ENCODE measurements at regions of chr17 and their contacts with region 1.

Region 1: GRCh38 chr17:7561028-7561575 is 617 bp upstream of the SENP3 start:
- DNase-seq: peak; percentile 76
- ATAC-seq: peak; percentile 68
- H3K4me3 Mint-ChIP-seq: peak overlapping the region; percentile 92
- H3K27ac Mint-ChIP-seq: peak overlapping the region; percentile 96
- H3K4me1 Mint-ChIP-seq: peaks cover 60% of the 10 kb centered on the region
- H3K27me3 Mint-ChIP-seq: no peaks in the 10 kb centered on the region
- CTCF ChIP-seq: no peak

Region 2: DNA sequence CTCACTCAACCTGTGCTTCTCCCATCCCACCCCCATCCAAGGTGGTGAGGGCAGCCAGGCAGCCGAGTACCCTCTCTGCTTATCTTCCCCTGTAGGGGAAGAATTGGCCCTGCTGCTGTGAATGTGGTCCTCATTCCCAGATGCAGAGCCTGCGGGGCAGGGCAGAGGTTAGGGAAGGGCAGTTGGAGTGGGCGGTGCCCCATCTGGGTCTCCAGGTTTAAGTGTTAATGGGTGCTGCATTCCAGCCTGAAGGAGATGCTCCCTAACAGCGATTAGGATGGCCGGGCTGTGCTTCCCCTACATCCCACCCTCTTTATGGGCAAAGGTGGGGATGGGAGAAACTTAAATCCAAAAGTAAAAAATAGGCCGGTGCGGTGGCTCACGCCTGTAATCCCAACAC is 194.0 kb before region 1 on chr17:
- CTCF ChIA-PET with region 1: no interaction called
- POLR2A ChIA-PET with region 1: no interaction called
- intact Hi-C with region 1: no loop called
- DNase-seq: no peak
- ATAC-seq: no peak
- H3K4me3 Mint-ChIP-seq: no peak overlapping the region
- H3K27ac Mint-ChIP-seq: no peak overlapping the region
- H3K4me1 Mint-ChIP-seq: no peaks in the 10 kb centered on the region
- H3K27me3 Mint-ChIP-seq: no peaks in the 10 kb centered on the region
- CTCF ChIP-seq: no peak

Region 3: GRCh38 chr17:7515911-7516610 is 45.0 kb before region 1 on chr17:
- CTCF ChIA-PET with region 1: interaction called, 364 read pairs
- POLR2A ChIA-PET with region 1: interaction called, 98 read pairs
- intact Hi-C with region 1: loop called (anchors 1 kb)
- DNase-seq: no peak
- ATAC-seq: no peak
- H3K4me3 Mint-ChIP-seq: no peak overlapping the region
- H3K27ac Mint-ChIP-seq: peak overlapping the region; percentile 35
- H3K4me1 Mint-ChIP-seq: no peaks in the 10 kb centered on the region
- H3K27me3 Mint-ChIP-seq: no peaks in the 10 kb centered on the region
- CTCF ChIP-seq: no peak

Region 4: GRCh38 chr17:7548585-7549400 is 12.3 kb before region 1 on chr17 and contains the start of gene TNFSF12:
- CTCF ChIA-PET with region 1: interaction called, 20 read pairs
- POLR2A ChIA-PET with region 1: interaction called, 56 read pairs
- intact Hi-C with region 1: loop called (anchors 1 kb)
- DNase-seq: peak; percentile 55
- ATAC-seq: peak; percentile 58
- H3K4me3 Mint-ChIP-seq: peak within 1 kb of the TSS; percentile 82
- H3K27ac Mint-ChIP-seq: peak within 1 kb of the TSS; percentile 90
- H3K4me1 Mint-ChIP-seq: peaks cover 52% of the 10 kb centered on the region
- H3K27me3 Mint-ChIP-seq: no peaks in the 10 kb centered on the region
- CTCF ChIP-seq: no peak
- total RNA-seq, gene TNFSF12: 25.2 and 30.7 TPM in 2 replicates

Region 5: DNA sequence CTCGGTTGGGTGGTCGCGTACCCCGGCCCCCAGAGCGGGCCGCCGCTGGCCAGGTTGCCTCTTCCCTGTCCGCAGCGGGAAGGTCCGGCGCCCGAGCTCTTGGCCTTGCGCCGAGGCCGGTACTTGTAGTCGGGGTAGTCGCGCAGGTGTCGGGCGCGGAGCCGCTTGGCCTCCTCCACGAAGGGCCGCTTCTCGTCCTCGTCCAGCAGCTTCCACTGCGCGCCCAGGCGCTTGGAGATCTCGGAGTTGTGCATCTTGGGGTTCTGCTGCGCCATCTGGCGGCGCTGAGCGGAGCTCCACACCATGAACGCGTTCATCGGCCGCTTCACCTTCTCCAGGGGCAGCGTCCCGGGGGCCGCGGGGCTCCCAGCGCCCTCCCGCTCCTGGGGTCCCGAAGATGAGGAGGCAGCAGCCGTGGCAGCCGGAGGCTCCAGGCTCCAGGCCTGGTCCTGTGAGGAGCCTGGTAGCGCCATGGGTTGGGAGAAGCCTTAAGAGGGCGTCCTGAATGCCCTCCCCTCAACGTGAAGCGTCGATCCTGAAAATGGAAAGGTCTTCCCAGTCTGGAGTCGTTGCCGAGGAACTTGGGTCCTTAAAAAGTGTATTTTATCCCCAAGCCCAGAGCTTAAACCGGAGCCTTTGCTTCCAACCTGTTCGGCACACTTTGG is 28.2 kb after region 1 on chr17:
- CTCF ChIA-PET with region 1: interaction called, 23 read pairs
- POLR2A ChIA-PET with region 1: interaction called, 39 read pairs
- intact Hi-C with region 1: loop called (anchors 1 kb)
- DNase-seq: peak; percentile 66
- ATAC-seq: peak; percentile 89
- H3K4me3 Mint-ChIP-seq: no peak overlapping the region
- H3K27ac Mint-ChIP-seq: no peak overlapping the region
- H3K4me1 Mint-ChIP-seq: peaks cover 13% of the 10 kb centered on the region
- H3K27me3 Mint-ChIP-seq: no peaks in the 10 kb centered on the region
- CTCF ChIP-seq: peak; percentile 44